Dorsolateral prefrontal cortex (tissue), 120 donors: ENCODE measurements at regions of chr13 and their contacts with region 1.

Region 1: GRCh38 chr13:112969692-112970338 is 801 bp downstream of the MCF2L start:
- DNase-seq: peak in 7 of 10 donors; percentile 3 to 45 (median 27)
- H3K4me3 ChIP-seq: peak overlapping the region; percentile 32 to 76 (median 61)
- H3K27ac ChIP-seq: peak overlapping the region in 53 of 59 donors; percentile 24 to 93 (median 76)
- H3K27me3 ChIP-seq: peaks cover 0 to 29% (median 0%) of the 10 kb centered on the region in 45 donors
- CTCF ChIP-seq: no peak

Region 2: GRCh38 chr13:112895521-112896465 is 74.0 kb before region 1 on chr13:
- intact Hi-C with region 1: loop called in 1 of 2 experiments (anchors 2 kb)
- DNase-seq: no peak
- H3K4me3 ChIP-seq: peak overlapping the region in 8 of 59 donors; percentile 53 to 68 (median 61)
- H3K27ac ChIP-seq: peak overlapping the region in 1 of 59 donors; percentile 77
- H3K27me3 ChIP-seq: peaks cover 0 to 25% (median 10%) of the 10 kb centered on the region in 45 donors
- CTCF ChIP-seq: no peak

Region 3: DNA sequence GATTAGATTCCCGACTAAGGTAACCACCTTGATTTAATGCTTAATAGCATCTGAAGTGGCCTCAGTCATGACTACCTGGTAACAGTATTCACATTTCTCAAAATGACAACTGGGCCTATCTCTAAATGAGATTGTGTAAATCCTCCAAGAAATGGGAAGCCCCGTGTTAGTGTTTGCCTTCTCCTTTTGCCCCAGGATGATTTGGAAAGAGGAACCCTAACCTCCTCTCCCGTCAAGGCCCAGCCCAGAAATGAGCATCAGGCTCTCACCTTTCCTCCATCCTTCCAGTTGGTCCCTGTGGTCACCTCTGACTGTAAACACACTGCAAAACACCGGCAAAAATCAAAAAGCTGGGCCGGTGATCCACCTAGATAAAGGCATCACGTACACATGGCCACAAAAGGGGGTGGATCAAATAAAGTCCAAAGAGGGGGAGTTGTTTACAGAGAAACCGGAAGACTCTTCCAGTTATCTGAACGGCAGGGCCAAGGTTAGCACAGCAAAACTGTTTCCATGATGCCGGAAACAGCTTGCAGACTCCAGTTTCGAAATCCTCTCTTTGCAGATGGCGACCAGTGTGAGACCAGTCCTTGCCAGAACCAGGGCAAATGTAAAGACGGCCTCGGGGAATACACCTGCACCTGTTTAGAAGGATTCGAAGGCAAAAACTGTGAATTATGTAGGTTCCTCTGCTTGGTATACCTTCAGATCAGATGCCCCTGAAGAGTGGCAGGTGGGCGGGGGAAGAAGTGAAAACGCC is 169.2 kb after region 1 on chr13:
- intact Hi-C with region 1: no loop called
- DNase-seq: peak in 1 of 10 donors; percentile 9
- H3K4me3 ChIP-seq: no peak overlapping the region
- H3K27ac ChIP-seq: no peak overlapping the region
- H3K27me3 ChIP-seq: no peaks in the 10 kb centered on the region
- CTCF ChIP-seq: no peak